Activated CD8-positive, alpha-beta memory T cell treated with anti-CD3 and anti-CD28 coated beads, Interleukin-2, amount 10 ng/mL, durations not matched to agents 7 days and 5 days (primary cell): ENCODE measurements at regions of chr2 and their contacts with region 1.

Region 1: GRCh38 chr2:42086500-42086953 is 38.7 kb downstream of the PKDCC start:
- DNase-seq: peak; percentile 60
- ATAC-seq: peak; percentile 68
- H3K4me3 Mint-ChIP-seq: no peak overlapping the region
- H3K27ac Mint-ChIP-seq: no peak overlapping the region
- H3K4me1 Mint-ChIP-seq: peaks cover 10% of the 10 kb centered on the region
- H3K27me3 Mint-ChIP-seq: peaks cover 19% of the 10 kb centered on the region

Region 2: GRCh38 chr2:41840702-41841551 is 245.6 kb before region 1 on chr2:
- CTCF ChIA-PET with region 1: interaction called, 30 read pairs
- DNase-seq: peak; percentile 98
- ATAC-seq: peak; percentile 100
- H3K4me3 Mint-ChIP-seq: peak overlapping the region; percentile 80
- H3K27ac Mint-ChIP-seq: peak overlapping the region; percentile 86
- H3K4me1 Mint-ChIP-seq: peaks cover 10% of the 10 kb centered on the region
- H3K27me3 Mint-ChIP-seq: peaks cover 36% of the 10 kb centered on the region

Region 3: DNA sequence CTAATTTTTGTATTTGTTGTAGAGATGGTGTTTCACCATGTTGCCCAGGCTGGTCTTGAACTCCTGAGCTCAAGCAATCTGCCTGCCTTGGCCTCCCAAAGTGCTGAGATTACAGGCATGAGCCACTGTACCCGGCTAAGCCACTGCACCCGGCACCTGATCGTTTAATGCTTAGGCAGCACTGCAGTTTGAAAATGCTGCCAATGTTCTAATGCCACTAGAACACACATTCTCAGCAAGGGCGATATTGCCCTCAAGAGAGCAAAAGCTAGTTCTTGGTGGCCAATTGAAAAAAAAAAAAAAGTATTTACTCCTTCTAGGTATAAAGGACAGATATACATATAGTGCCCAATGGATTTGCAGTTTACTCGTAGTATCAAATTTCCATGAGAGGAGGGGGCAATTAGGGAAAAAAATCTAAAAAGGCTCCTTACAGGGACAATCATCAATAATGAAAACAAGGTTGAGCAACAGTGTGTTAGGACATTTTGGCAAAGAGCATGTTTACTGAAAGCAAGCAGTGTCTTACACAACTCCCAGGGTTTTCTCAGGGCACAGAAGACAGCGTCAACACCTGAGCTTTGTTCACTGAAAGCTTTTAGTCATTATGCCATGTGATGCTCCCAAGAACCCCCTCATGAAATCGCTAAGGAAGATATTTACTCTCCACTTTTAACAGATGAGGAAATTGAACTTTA is 238.6 kb before region 1 on chr2:
- CTCF ChIA-PET with region 1: interaction called, 115 read pairs
- DNase-seq: no peak
- ATAC-seq: no peak
- H3K4me3 Mint-ChIP-seq: no peak overlapping the region
- H3K27ac Mint-ChIP-seq: no peak overlapping the region
- H3K4me1 Mint-ChIP-seq: no peaks in the 10 kb centered on the region
- H3K27me3 Mint-ChIP-seq: peaks cover 34% of the 10 kb centered on the region

Region 4: DNA sequence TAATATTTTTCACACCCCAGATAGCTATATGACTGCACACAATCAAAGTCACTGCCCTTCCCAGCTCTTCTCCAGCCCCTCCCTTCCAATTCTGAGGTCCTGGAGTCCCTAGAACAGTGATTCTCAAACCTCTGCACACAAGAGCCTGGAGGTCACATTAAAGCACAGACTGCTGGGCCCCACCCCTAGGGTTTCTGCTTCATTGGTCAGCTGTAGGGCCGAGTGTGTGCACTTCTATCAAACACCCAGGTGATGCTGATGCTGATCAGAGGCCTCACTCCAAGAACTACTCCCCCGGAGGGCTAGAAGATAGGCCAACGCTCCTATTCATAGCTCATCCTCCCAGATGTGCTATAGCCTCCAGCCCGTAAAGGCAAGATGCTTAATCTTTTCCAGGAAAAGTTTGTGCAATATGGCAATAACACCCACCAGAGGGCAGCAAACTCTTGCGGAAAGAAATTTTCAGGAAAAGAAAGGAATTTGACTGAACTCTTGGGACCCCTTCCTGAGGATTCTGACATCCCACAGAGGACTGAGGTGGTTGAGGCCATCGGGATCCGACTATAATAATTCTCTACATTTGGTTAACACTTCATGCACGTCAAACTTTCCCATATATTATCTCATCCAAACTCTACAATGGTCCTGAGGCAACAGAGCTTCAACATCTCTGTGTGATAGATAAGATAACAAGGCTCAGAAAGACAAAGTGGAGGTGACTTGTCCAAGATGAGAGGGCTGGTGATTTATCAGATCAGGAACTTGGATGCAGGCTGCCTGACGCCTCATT is 232.9 kb before region 1 on chr2:
- CTCF ChIA-PET with region 1: interaction called, 115 read pairs
- DNase-seq: no peak
- ATAC-seq: no peak
- H3K4me3 Mint-ChIP-seq: no peak overlapping the region
- H3K27ac Mint-ChIP-seq: no peak overlapping the region
- H3K4me1 Mint-ChIP-seq: no peaks in the 10 kb centered on the region
- H3K27me3 Mint-ChIP-seq: peaks cover 14% of the 10 kb centered on the region

Region 5: GRCh38 chr2:41869542-41870264 is 216.8 kb before region 1 on chr2:
- CTCF ChIA-PET with region 1: interaction called, 207 read pairs
- DNase-seq: peak; percentile 71
- ATAC-seq: peak; percentile 74
- H3K4me3 Mint-ChIP-seq: no peak overlapping the region
- H3K27ac Mint-ChIP-seq: no peak overlapping the region
- H3K4me1 Mint-ChIP-seq: peaks cover 15% of the 10 kb centered on the region
- H3K27me3 Mint-ChIP-seq: peaks cover 38% of the 10 kb centered on the region

Region 6: GRCh38 chr2:42328148-42328833 is 241.8 kb after region 1 on chr2:
- CTCF ChIA-PET with region 1: interaction called, 12 read pairs
- DNase-seq: no peak
- ATAC-seq: no peak
- H3K4me3 Mint-ChIP-seq: no peak overlapping the region
- H3K27ac Mint-ChIP-seq: peak overlapping the region; percentile 12
- H3K4me1 Mint-ChIP-seq: peaks cover 16% of the 10 kb centered on the region
- H3K27me3 Mint-ChIP-seq: no peaks in the 10 kb centered on the region